Common myeloid progenitor, CD34-positive (primary cell): ENCODE measurements at regions of chr18 and their contacts with region 1.

Region 1: GRCh38 chr18:9147440-9148202 is 11.0 kb downstream of the ANKRD12 start:
- DNase-seq: peak; percentile 71 to 76 (median 75)
- H3K4me3 ChIP-seq: peak overlapping the region in 3 of 7 experiments; percentile 31 to 42 (median 36)
- H3K27ac ChIP-seq: peak overlapping the region; percentile 7 to 68
- H3K4me1 ChIP-seq: peaks cover 20 to 76% (median 46%) of the 10 kb centered on the region in 4 experiments
- H3K27me3 ChIP-seq: no peaks in the 10 kb centered on the region

Region 2: DNA sequence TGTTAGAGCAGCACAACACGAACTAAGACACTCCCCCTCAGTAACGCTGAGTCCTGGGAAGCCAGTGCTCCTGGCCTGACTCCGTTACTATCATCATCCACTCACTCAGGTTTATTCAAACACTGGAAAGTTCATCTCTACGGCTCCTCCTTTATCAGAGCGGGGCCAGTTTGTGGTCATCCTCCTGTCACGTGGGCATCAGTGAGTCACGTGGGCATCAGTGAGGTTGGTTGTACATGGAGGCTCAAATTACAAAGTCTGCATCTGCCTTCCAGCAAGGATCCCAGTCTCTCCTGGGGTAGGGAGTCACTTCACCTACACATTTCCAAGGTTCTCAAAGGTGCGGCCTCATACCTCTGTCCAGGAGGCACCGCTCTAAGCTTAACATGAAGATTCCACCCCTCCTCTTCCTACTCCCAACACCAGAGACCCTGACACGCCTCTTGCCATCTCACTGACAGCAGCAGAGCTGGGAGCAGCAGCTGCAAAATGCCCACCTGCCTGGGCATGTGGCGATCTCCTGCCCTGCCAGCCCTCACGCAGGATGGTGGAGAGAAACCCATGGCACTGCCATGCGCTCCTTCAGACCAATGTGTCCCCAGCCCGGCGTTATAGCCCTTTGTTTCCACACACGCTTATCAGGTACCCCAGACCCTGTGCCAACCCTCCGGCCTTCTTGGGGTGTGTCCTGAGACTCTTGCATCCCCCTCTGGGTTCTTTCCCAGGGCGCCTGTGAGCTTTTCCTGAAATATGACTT is 1679.7 kb before region 1 on chr18:
- CTCF ChIA-PET with region 1: no interaction called
- POLR2A ChIA-PET with region 1: no interaction called
- DNase-seq: no peak
- H3K4me3 ChIP-seq: no peak overlapping the region
- H3K27ac ChIP-seq: no peak overlapping the region
- H3K4me1 ChIP-seq: peaks cover 0 to 17% (median 3%) of the 10 kb centered on the region in 4 experiments
- H3K27me3 ChIP-seq: no peaks in the 10 kb centered on the region

Region 3: DNA sequence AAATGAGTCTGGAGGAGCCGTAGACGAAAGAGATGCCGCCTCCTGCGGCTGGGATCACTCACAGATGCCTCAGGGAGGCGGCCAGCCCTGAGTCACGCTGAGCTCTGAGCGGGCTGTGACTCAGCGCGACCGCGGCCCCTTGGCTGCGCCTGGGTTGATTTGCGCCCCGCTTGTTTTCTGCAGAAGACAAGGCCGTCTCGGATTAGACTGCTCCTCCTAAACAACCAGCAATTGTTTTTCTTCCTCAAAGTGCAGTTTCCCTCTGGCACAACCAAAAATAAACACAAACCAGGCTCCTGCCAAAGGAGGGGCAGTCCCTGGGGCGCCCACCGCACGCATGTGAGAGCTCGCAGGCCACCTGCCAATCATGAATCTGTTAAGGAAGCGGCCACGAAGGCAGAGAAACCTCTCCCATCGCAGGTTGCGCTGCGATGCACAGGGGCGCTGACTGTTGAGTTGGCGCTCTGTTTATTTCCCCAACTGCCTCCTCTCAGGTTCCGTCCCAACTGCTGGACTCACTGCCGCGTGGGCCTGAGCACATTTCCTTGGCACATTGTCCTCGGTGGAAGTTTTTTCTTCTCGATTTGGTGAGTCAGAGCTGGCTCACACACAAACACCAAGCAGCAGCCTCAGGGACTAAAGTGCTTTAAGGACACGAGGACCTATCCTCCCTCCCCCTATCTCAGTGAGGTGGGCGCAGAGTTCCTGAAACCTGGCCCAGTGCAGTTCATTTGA is 130.3 kb before region 1 on chr18:
- CTCF ChIA-PET with region 1: no interaction called
- POLR2A ChIA-PET with region 1: no interaction called
- DNase-seq: peak; percentile 86 to 97 (median 96)
- H3K4me3 ChIP-seq: peak overlapping the region in 5 of 7 experiments; percentile 33 to 69 (median 60)
- H3K27ac ChIP-seq: peak overlapping the region in 1 of 2 experiments; percentile 82
- H3K4me1 ChIP-seq: peaks cover 0 to 16% (median 14%) of the 10 kb centered on the region in 4 experiments
- H3K27me3 ChIP-seq: no peaks in the 10 kb centered on the region

Region 4: DNA sequence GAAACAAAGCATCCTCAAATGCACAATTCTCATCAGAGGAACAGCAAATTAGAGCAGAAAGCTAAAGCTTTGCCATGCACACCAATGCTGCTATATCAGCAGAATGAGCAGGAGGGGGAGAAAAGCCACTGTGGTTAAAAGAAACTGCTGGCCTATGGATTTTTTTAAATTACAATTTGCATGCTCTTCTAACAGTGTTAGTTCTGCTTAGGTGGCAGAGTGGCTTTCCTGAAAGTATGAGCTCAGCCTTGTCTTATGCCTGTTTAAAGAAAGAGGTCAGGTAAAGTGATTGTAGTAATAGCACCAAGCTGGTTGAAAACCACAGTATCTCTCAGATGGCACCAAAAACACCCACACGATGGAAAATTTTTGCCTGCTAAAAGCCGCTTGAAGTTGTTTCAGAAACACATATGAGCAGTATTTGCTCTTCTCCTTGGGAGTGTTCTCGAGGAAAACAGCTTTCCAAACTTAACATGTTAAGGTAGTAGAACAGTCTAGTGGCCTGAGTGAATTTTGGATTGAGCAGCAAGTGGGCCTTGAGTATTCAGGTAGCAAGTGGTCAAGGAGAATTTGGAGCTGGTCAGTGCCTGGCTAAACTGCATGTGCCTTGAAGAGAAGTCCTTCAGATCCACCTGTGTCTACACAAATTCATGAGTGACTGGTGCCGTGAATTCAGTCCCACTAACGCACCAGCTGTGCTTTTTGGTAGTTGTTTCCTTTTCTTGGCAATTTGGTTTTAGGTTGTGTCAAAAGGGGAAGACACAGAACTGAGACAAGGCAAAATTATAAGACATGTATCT is 64.7 kb before region 1 on chr18:
- CTCF ChIA-PET with region 1: interaction called, 13 read pairs
- POLR2A ChIA-PET with region 1: no interaction called
- DNase-seq: peak; percentile 22 to 68 (median 60)
- H3K4me3 ChIP-seq: peak overlapping the region in 4 of 7 experiments; percentile 2 to 42 (median 9)
- H3K27ac ChIP-seq: peak overlapping the region in 1 of 2 experiments; percentile 55
- H3K4me1 ChIP-seq: peaks cover 6 to 49% (median 30%) of the 10 kb centered on the region in 4 experiments
- H3K27me3 ChIP-seq: no peaks in the 10 kb centered on the region

Region 5: GRCh38 chr18:9233771-9234440 is 86.3 kb after region 1 on chr18:
- CTCF ChIA-PET with region 1: no interaction called
- POLR2A ChIA-PET with region 1: no interaction called
- DNase-seq: no peak
- H3K4me3 ChIP-seq: no peak overlapping the region
- H3K27ac ChIP-seq: no peak overlapping the region
- H3K4me1 ChIP-seq: peaks cover 0 to 12% (median 8%) of the 10 kb centered on the region in 4 experiments
- H3K27me3 ChIP-seq: no peaks in the 10 kb centered on the region